ENCODE measurements at regions of chr15 and their contacts with region 1.

Region 1: DNA sequence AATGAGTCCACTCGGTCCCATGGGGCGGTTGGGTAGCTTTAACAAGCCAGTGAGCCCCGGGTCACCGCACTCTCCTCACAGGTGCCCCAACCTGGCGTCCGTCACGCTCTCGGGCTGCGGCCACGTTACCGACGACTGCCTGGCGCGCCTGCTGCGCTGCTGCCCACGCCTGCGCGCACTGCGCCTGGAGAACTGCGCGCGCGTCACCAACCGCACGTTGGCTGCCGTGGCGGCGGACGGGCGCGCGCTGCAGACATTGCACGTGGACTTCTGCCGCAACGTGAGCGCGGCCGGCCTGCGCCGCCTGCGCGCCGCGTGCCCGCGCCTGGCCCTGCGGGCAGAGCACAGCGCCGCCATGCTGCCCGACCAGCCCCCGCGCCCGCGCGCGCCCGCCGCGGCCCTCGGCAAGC is 3.4 kb downstream of the FBXL22 start:
- DNase-seq: peak; percentile 84
- H3K4me3 Mint-ChIP-seq: peak overlapping the region; percentile 83
- H3K27ac Mint-ChIP-seq: peak overlapping the region; percentile 27
- H3K4me1 Mint-ChIP-seq: peaks cover 11% of the 10 kb centered on the region
- H3K27me3 Mint-ChIP-seq: no peaks in the 10 kb centered on the region
- CTCF ChIP-seq: no peak

Region 2: DNA sequence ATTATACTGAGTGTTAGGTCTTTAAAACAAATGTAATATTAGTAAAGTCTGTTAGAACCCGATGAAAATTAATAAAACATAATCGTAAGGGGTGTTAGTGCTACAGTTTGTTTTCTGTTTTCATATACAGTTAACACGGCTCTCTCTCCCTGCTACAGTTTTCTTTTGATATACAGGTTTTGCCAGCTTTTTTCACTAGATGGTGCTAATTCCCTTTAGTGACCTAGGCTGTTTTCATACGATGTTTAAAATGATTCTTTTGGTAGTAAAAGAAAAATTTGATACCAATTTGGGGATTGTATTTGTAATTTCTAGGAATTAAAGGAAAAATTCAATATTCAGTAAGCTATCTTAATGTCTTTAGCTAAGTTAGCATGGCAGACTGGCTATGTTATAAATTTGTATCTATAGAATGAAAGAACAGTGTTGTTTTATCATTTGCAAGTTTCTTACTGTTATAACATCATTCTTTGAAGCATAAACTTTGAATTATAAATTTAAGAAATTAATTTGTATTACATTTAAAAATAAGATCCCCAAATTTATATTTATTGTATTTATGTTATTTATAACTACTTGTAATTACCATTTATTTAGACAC is 311.7 kb before region 1 on chr15:
- CTCF ChIA-PET with region 1: interaction called, 11 read pairs
- POLR2A ChIA-PET with region 1: no interaction called
- intact Hi-C with region 1: loop called (anchors 1 kb)
- DNase-seq: peak; percentile 67
- H3K4me3 Mint-ChIP-seq: no peak overlapping the region
- H3K27ac Mint-ChIP-seq: no peak overlapping the region
- H3K4me1 Mint-ChIP-seq: no peaks in the 10 kb centered on the region
- H3K27me3 Mint-ChIP-seq: no peaks in the 10 kb centered on the region
- CTCF ChIP-seq: peak; percentile 61

Region 3: GRCh38 chr15:63408514-63408913 is 192.1 kb before region 1 on chr15:
- CTCF ChIA-PET with region 1: no interaction called
- POLR2A ChIA-PET with region 1: no interaction called
- intact Hi-C with region 1: no loop called
- DNase-seq: no peak
- H3K4me3 Mint-ChIP-seq: no peak overlapping the region
- H3K27ac Mint-ChIP-seq: no peak overlapping the region
- H3K4me1 Mint-ChIP-seq: no peaks in the 10 kb centered on the region
- H3K27me3 Mint-ChIP-seq: no peaks in the 10 kb centered on the region
- CTCF ChIP-seq: no peak

Region 4: GRCh38 chr15:63430766-63431449 is 169.7 kb before region 1 on chr15:
- CTCF ChIA-PET with region 1: no interaction called
- POLR2A ChIA-PET with region 1: no interaction called
- intact Hi-C with region 1: no loop called
- DNase-seq: no peak
- H3K4me3 Mint-ChIP-seq: no peak overlapping the region
- H3K27ac Mint-ChIP-seq: no peak overlapping the region
- H3K4me1 Mint-ChIP-seq: no peaks in the 10 kb centered on the region
- H3K27me3 Mint-ChIP-seq: no peaks in the 10 kb centered on the region
- CTCF ChIP-seq: no peak

Region 5: DNA sequence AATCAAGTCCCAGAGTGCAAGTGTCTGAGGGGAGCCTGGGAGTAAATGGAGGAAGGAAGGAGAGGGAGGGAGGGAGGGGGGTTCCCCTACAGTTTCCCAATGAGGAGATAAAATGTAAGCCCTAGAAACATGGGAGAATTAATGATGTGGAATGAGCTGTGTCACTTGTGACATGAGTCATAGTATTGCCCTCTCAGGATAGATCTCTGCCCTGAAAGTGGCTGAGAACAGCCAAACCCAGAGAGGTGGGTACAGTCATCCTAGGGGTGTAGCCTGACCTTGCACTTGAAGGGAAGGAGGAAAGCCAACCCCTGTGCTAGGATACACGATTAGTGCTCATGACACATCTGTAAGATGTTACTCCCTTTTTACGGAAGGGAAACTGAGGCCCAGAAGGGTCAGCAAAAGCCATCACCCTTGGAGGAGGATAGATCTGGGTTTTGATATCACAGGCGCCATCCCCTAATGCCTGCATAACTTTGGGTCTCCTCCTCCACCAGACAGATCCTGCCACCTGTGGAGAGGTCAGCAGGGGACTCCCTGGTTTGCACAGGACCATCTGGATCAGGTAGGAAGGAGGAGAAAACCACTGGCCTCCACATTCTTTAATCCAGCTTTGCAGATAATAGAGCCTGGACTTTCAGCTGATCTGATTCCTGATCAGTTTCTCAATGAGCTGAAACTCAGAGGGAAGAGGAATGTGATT is 119.4 kb before region 1 on chr15:
- CTCF ChIA-PET with region 1: interaction called, 19 read pairs
- POLR2A ChIA-PET with region 1: interaction called, 45 read pairs
- intact Hi-C with region 1: no loop called
- DNase-seq: peak; percentile 56
- H3K4me3 Mint-ChIP-seq: no peak overlapping the region
- H3K27ac Mint-ChIP-seq: no peak overlapping the region
- H3K4me1 Mint-ChIP-seq: peaks cover 16% of the 10 kb centered on the region
- H3K27me3 Mint-ChIP-seq: no peaks in the 10 kb centered on the region
- CTCF ChIP-seq: no peak

Region 6: DNA sequence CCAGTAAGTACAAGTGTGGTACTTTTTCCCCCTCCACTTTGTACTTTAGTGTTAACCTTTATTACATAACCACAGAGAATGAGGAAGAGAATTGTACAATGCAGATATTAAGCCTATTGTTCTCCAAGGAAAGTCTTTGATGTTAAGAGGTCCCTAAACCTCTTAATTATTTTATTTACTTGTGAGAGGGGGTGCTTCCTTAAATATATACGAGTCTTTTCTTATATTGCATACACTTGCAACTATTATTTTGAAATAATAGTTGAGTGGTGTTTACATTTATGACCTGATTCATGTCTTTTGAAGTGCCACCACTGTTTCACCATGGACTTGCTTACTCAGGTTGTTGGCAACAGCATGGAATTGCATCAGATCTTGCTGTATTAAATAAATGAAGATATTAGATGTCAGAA is 86.1 kb before region 1 on chr15:
- CTCF ChIA-PET with region 1: interaction called, 8 read pairs
- POLR2A ChIA-PET with region 1: interaction called, 10 read pairs
- intact Hi-C with region 1: no loop called
- DNase-seq: peak; percentile 93
- H3K4me3 Mint-ChIP-seq: peak overlapping the region; percentile 51
- H3K27ac Mint-ChIP-seq: peak overlapping the region; percentile 94
- H3K4me1 Mint-ChIP-seq: peaks cover 73% of the 10 kb centered on the region
- H3K27me3 Mint-ChIP-seq: no peaks in the 10 kb centered on the region
- CTCF ChIP-seq: no peak

Region 7: DNA sequence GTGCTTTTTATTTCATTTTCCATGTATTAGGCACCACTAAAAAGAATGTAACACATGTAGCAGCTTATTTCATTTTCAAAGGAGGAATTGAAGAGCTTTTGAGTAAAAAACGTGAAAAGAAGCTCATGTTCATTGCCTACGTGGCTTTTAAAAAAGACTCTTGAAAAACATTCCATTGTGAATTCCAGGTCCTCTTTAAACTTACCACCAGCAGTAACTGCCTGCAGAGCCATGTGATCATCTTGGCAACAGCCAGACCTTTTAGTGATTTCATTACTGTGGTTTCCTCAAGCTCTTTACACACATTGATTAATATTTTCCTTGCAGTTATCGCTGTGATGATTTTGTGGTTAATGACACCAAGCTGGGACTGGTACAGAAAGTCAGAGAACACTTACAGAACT is 47.2 kb before region 1 on chr15:
- CTCF ChIA-PET with region 1: interaction called, 8 read pairs
- POLR2A ChIA-PET with region 1: interaction called, 20 read pairs
- intact Hi-C with region 1: no loop called
- DNase-seq: peak; percentile 62
- H3K4me3 Mint-ChIP-seq: peak overlapping the region; percentile 30
- H3K27ac Mint-ChIP-seq: peak overlapping the region; percentile 6
- H3K4me1 Mint-ChIP-seq: peaks cover 22% of the 10 kb centered on the region
- H3K27me3 Mint-ChIP-seq: no peaks in the 10 kb centered on the region
- CTCF ChIP-seq: no peak

Region 8: DNA sequence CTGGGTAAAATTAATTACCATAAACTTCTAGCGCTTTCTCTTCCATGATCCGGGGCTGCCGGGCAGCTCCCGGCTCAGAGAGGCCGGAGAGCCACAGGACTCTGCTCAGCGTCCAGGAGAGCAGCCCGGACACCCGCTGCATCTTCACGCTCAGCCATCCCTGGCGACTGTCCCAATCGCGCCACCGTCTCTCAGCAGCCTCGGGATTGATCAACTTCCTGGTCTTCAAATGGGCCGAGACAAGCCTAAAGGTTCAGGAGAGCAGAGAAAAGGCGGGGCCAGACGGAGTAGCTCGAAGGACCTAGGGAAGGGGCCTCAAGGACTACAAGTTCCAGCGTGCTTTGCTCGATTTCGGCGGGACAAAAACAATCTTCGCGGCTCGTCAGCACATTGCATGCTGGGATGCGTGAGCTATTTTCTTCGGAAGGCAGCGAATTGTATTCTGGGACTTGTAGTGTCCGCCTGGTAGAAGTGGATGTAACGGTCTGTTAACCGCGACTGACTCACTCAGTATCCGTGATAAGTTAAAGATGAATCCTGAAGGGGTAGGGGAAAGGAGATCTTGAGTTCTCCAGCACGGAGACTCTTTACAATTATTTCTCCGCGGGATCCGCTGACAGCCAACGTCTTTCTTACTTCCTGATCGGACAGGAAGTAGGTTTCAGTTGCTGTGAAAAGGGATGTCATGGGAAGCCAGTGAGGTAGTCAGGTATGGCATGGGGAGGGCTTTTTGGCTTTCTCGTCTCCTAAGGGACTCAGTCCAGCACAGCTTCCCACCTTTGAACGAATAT is 493.2 kb after region 1 on chr15 and contains the start of gene CIAO2A:
- CTCF ChIA-PET with region 1: no interaction called
- POLR2A ChIA-PET with region 1: interaction called, 16 read pairs
- intact Hi-C with region 1: no loop called
- DNase-seq: peak; percentile 99
- H3K4me3 Mint-ChIP-seq: peak within 1 kb of the TSS; percentile 92
- H3K27ac Mint-ChIP-seq: peak within 1 kb of the TSS; percentile 96
- H3K4me1 Mint-ChIP-seq: peaks cover 30% of the 10 kb centered on the region
- H3K27me3 Mint-ChIP-seq: no peaks in the 10 kb centered on the region
- CTCF ChIP-seq: no peak
- total RNA-seq, gene CIAO2A: 38.7 and 44.7 TPM in 2 replicates